CD8-positive, alpha-beta T cell (primary cell): ENCODE measurements at regions of chr21 and their contacts with region 1.

Region 1: DNA sequence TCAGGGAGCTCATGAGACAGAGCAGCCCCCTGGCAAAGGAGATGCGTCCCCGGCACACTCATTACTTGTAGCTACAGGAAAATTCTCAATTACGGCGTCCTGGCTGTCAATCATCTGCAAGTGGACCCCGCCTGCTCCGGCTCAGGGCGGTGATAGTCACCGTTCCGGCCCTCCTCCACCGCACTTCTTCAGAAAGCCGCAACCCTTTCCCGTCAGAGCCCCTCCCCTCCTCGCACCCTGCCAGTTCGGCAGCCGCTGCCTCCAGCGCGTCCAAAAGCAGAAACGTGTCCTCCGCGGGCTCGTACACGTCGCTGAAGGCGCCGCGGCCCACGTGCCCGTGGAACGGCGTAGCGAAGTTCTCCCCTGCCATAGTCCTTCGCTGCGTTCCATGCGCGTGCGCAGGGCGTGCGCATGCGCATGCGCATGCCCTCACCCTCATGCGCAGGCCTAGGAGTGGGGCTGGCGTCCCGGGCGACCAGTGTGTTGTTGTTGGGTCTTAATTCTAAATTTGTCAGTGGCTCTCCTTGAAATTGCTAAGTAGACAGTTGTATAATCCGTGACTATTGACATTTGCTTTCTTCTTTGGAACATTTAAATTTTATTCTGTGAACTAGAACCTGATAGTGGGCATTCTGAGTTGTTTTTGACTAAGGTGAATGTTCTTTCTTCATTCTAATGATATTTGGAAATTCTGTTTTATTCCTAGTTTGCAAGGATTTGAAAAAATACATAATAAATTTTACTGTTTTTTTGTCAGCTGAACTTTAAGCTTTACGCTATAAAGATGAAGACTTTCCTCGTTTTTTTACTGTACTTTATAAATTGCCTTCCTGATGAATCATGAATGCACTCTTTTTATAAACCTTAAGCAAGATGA is 107.5 kb downstream of the LTN1 start:
- DNase-seq: peak; percentile 81 to 98 (median 90)
- ATAC-seq: peak; percentile 91
- H3K4me3 ChIP-seq: peak overlapping the region; percentile 68
- H3K4me3 Mint-ChIP-seq: peak overlapping the region; percentile 92
- H3K27ac ChIP-seq: peak overlapping the region; percentile 87 to 93
- H3K27ac Mint-ChIP-seq: peak overlapping the region; percentile 99
- H3K4me1 ChIP-seq: peaks cover 20% of the 10 kb centered on the region
- H3K4me1 Mint-ChIP-seq: peaks cover 20% of the 10 kb centered on the region
- H3K27me3 ChIP-seq: no peaks in the 10 kb centered on the region
- H3K27me3 Mint-ChIP-seq: no peaks in the 10 kb centered on the region
- CTCF ChIP-seq: no peak

Region 2: DNA sequence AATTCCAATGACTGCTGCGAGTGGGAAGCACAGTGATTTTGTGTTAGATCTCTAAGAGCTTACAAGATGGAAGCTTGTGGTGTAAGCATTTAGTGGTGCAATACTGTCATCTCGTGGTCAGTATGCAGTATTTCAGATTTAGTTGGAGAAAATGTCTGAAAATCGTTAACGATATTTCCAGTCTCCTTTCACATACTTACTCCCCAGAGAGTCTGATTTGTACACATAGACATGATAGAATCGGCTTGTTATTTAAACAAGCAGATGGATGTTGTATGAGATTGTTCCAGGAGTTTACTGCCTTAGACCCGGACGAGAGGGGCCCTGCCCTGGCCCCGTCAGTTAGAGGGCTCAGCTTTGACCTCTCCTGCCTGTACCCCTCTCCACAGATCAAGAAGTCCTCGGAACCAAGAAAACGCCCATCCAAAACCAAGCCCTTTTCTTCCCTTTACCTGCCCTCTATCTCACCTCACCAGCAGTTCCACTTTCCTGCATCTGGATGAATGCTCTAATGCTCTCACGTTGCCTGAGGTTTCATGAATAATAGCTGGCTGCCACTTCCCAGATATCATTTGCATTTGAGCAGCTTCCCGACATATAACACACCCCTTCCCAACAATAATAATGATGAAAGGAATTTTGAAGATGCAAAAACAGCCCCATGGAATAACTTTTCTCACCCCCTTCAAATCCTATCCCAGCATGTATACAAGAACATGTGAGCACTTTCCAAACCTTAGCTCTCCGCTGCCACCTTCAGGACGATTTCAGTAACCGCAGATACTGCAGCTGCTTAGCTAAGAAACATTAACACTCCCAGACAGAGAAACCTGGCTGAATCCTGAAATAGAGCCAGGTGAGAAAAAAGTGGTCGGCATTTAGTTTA is 139.8 kb before region 1 on chr21:
- CTCF ChIA-PET with region 1: interaction called, 10 read pairs
- POLR2A ChIA-PET with region 1: no interaction called
- intact Hi-C with region 1: loop called in 1 of 2 experiments (anchors 1 kb)
- DNase-seq: peak; percentile 42 to 86 (median 68)
- ATAC-seq: peak; percentile 86
- H3K4me3 ChIP-seq: peak overlapping the region; percentile 49 to 50
- H3K4me3 Mint-ChIP-seq: no peak overlapping the region
- H3K27ac ChIP-seq: no peak overlapping the region
- H3K27ac Mint-ChIP-seq: no peak overlapping the region
- H3K4me1 ChIP-seq: no peaks in the 10 kb centered on the region
- H3K4me1 Mint-ChIP-seq: no peaks in the 10 kb centered on the region
- H3K27me3 ChIP-seq: no peaks in the 10 kb centered on the region
- H3K27me3 Mint-ChIP-seq: no peaks in the 10 kb centered on the region
- CTCF ChIP-seq: peak; percentile 73

Region 3: DNA sequence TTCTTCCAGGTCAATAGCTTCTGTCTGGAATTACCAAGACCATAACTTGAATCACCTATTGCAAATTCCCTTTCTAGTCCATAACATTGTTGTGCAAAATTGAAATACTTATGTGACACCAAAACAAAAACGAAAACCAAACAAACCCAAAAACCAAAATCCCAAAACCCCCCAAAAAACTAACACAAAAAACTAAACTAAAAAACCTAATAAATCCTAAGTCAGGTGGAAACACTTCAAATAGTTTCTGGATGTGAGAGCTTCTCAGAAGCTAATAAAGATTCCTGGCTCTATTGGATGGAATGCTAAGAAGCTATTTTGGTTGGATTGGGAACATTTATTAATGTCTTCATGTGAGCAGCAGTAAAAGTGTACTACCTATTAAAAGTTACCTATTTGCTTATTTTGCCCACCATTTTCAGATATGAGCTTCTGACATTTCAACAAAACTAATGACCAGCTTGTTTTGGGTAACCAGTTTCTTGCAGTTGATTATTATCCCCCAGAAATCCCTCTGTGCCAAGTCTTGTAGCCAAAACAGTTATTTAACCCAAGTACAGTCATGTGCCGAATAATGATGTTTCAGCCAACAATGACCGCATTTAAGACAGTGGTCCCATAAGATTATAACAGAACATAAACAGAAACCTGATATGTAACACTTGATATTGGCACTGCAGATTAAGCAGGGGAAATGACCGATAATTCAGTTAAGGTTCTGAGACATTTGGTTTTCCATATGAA is 31.1 kb after region 1 on chr21:
- CTCF ChIA-PET with region 1: no interaction called
- POLR2A ChIA-PET with region 1: no interaction called
- intact Hi-C with region 1: no loop called
- DNase-seq: no peak
- ATAC-seq: no peak
- H3K4me3 ChIP-seq: no peak overlapping the region
- H3K4me3 Mint-ChIP-seq: no peak overlapping the region
- H3K27ac ChIP-seq: no peak overlapping the region
- H3K27ac Mint-ChIP-seq: no peak overlapping the region
- H3K4me1 ChIP-seq: no peaks in the 10 kb centered on the region
- H3K4me1 Mint-ChIP-seq: no peaks in the 10 kb centered on the region
- H3K27me3 ChIP-seq: no peaks in the 10 kb centered on the region
- H3K27me3 Mint-ChIP-seq: peaks cover 5% of the 10 kb centered on the region
- CTCF ChIP-seq: no peak

Region 4: GRCh38 chr21:28928578-28929420 is 43.6 kb after region 1 on chr21:
- CTCF ChIA-PET with region 1: no interaction called
- POLR2A ChIA-PET with region 1: no interaction called
- intact Hi-C with region 1: loop called in 1 of 2 experiments (anchors 2 kb)
- DNase-seq: no peak
- ATAC-seq: no peak
- H3K4me3 ChIP-seq: no peak overlapping the region
- H3K4me3 Mint-ChIP-seq: no peak overlapping the region
- H3K27ac ChIP-seq: no peak overlapping the region
- H3K27ac Mint-ChIP-seq: no peak overlapping the region
- H3K4me1 ChIP-seq: no peaks in the 10 kb centered on the region
- H3K4me1 Mint-ChIP-seq: no peaks in the 10 kb centered on the region
- H3K27me3 ChIP-seq: no peaks in the 10 kb centered on the region
- H3K27me3 Mint-ChIP-seq: no peaks in the 10 kb centered on the region
- CTCF ChIP-seq: no peak

Region 5: GRCh38 chr21:29024474-29025327 is 139.5 kb after region 1 on chr21 and contains the start of gene USP16:
- CTCF ChIA-PET with region 1: no interaction called
- POLR2A ChIA-PET with region 1: interaction called, 6 read pairs
- intact Hi-C with region 1: loop called (anchors 1 kb)
- DNase-seq: peak; percentile 87 to 98 (median 94)
- ATAC-seq: peak; percentile 87
- H3K4me3 ChIP-seq: peak within 1 kb of the TSS; percentile 65 to 91
- H3K4me3 Mint-ChIP-seq: peak within 1 kb of the TSS; percentile 95
- H3K27ac ChIP-seq: peak within 1 kb of the TSS; percentile 93 to 98
- H3K27ac Mint-ChIP-seq: peak within 1 kb of the TSS; percentile 100
- H3K4me1 ChIP-seq: peaks cover 45% of the 10 kb centered on the region
- H3K4me1 Mint-ChIP-seq: peaks cover 59% of the 10 kb centered on the region
- H3K27me3 ChIP-seq: no peaks in the 10 kb centered on the region
- H3K27me3 Mint-ChIP-seq: no peaks in the 10 kb centered on the region
- CTCF ChIP-seq: no peak
- total RNA-seq, gene USP16: 84.8 to 91.2 TPM

Region 6: DNA sequence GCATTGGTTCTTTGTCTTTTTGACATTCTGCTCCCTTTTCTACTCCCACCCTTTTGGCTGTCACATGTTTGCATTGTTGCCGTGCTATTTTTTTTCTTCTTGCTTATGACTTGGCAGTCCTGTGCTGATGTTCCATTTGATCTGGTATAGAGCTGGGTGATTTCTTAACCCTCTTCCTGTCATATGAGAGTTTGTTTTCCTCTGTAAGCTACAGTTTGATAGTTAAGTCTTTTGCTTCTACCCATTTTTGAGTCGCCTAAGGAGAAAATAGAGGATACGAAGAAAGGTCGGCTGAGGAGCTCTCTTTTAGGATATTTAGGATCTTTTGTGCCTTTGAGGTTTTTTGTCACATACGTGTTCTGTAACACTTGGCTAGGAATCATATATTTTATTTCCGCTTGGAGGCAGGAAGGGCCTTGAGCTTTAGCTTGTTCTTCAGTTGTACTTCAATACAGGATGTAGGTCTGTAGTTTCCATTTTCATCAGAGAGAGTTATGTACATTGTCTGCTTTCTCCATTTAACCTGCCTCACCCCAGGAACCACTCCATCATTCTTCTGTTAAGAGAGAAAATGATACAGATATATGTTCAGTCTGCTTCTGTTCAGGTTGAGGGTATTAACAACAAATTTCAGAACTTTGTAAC is 564.2 kb after region 1 on chr21:
- CTCF ChIA-PET with region 1: no interaction called
- POLR2A ChIA-PET with region 1: no interaction called
- intact Hi-C with region 1: loop called in 1 of 2 experiments (anchors 10 kb)
- DNase-seq: peak in 3 of 9 experiments; percentile 41 to 69 (median 42)
- ATAC-seq: peak; percentile 84
- H3K4me3 ChIP-seq: no peak overlapping the region
- H3K4me3 Mint-ChIP-seq: peak overlapping the region; percentile 70
- H3K27ac ChIP-seq: peak overlapping the region; percentile 52 to 65
- H3K27ac Mint-ChIP-seq: peak overlapping the region; percentile 97
- H3K4me1 ChIP-seq: peaks cover 23% of the 10 kb centered on the region
- H3K4me1 Mint-ChIP-seq: peaks cover 40% of the 10 kb centered on the region
- H3K27me3 ChIP-seq: no peaks in the 10 kb centered on the region
- H3K27me3 Mint-ChIP-seq: no peaks in the 10 kb centered on the region
- CTCF ChIP-seq: no peak